Lower leg skin (tissue), 4 donors: ENCODE measurements at regions of chr6 and their contacts with region 1.

Region 1: DNA sequence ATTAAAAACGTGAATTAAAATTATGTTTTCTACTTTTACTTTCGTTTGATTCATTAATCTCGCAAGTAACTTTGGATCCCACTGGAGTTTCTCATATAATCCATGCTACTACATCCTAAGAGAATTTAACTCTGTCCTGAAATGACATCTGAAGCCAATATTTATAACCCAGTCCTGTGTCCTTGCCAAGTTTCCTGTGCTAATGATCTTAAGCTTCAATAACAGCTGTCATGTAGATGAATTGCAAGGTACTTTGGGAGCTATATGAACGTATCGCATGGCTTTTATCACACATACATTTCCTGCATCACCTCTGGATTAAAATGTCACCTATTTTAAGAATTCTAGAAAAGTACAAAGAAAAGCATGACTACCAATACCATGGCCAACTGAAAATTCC is 833.8 kb upstream of the CITED2 start:
- DNase-seq: no peak
- H3K4me3 ChIP-seq: no peak overlapping the region
- CTCF ChIP-seq: no peak
- POLR2A ChIP-seq: no peak

Region 2: DNA sequence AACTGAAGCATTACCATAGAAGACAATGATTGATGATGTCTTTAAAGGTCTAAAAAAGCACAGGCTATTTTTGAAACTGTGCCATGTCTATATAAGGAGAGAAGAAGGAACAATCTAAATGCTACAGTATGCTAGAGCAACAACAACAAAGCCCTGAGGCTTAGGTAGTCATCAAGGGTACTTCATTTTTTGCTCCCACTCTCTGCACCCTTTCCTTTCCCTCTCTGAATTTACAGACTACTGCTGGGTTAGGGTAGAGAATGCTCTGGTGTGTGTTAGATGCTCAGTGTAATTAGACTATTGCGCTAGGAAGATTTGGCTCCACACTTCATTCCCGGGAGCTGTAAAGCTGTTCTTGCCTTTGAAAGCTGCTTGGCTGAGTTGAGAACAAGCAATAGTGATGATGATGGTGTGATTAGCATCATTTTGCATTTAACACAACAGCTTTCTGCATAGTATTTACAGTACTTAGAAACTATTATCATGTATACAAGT is 428.7 kb after region 1 on chr6:
- intact Hi-C with region 1: loop called (anchors 5 kb)
- DNase-seq: no peak
- H3K4me3 ChIP-seq: no peak overlapping the region
- CTCF ChIP-seq: no peak
- POLR2A ChIP-seq: no peak